Activated T-helper 1 cell treated with anti-CD3 and anti-CD28 coated beads, Interleukin-12 subunit alpha, Interleukin-12 subunit beta, Interleukin-2, Interleukin-4 antibody, amounts not matched to agents 30 ng/mL and 10 ng/mL and 1 ng/mL, durations not matched to agents 14 hours and 24 hours and 36 hours (primary cell): ENCODE measurements at regions of chr21 and their contacts with region 1.

Region 1: DNA sequence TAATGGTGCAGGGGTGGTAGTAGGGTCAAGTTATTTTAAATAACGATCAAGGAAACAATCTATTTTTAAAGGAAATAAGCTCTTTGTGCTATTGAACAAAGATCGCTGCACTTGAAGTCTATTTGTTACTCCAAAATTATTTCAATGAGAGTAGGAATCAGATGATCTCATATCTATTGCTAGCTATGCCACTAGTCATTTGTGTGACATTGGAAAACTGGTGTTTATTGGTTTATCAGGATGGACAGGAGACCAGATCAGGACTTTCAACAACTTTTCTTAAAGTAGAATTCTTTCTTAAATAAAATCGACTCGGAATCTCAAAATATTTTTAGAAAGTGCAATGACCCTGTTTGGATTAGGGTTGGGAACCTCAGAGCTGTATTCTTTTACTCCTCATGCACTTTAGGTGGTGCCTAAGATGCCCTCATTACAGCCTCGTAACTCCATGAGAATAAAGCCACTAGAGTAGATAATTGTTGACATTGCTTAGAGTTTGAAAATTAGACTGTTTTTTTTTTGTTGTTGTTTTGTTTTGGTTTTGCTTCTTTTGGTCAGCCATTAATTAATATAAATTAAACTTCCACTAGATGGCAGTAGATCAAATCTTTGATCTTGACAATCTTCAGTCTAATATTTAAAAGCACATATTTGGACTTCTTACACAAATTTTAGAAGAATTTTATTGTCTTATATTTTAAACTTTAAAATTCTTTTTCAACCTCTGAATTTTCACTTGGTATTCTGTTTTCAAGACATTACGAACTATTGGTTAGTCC is 352.4 kb downstream of the USP25 start:
- DNase-seq: no peak
- H3K4me3 Mint-ChIP-seq: no peak overlapping the region
- H3K27ac Mint-ChIP-seq: no peak overlapping the region
- H3K4me1 Mint-ChIP-seq: no peaks in the 10 kb centered on the region
- H3K27me3 Mint-ChIP-seq: no peaks in the 10 kb centered on the region

Region 2: GRCh38 chr21:15592271-15592860 is 489.9 kb before region 1 on chr21:
- intact Hi-C with region 1: no loop called
- DNase-seq: no peak
- H3K4me3 Mint-ChIP-seq: no peak overlapping the region
- H3K27ac Mint-ChIP-seq: no peak overlapping the region
- H3K4me1 Mint-ChIP-seq: no peaks in the 10 kb centered on the region
- H3K27me3 Mint-ChIP-seq: peaks cover 13% of the 10 kb centered on the region

Region 3: DNA sequence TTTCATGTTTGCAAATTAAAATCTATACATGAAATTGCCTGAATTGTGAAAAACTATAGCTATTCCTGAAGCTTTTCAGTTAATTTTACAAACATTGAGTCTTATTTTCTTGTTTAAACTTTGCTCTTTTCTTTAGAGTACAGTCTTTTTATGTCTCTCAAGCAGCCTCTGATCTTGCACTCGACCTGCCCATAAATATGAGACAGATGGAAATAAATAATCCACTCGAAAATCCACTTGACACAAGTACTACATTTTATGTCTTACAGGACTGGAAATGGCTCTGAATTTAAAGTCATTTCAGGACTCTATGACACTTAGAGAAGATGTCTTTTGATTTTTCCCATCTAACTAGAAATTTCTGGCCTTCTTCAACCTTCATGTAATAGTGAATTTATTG is 68.7 kb before region 1 on chr21:
- intact Hi-C with region 1: no loop called
- DNase-seq: no peak
- H3K4me3 Mint-ChIP-seq: no peak overlapping the region
- H3K27ac Mint-ChIP-seq: no peak overlapping the region
- H3K4me1 Mint-ChIP-seq: no peaks in the 10 kb centered on the region
- H3K27me3 Mint-ChIP-seq: no peaks in the 10 kb centered on the region

Region 4: GRCh38 chr21:16040601-16041000 is 41.6 kb before region 1 on chr21:
- intact Hi-C with region 1: no loop called
- DNase-seq: no peak
- H3K4me3 Mint-ChIP-seq: no peak overlapping the region
- H3K27ac Mint-ChIP-seq: no peak overlapping the region
- H3K4me1 Mint-ChIP-seq: no peaks in the 10 kb centered on the region
- H3K27me3 Mint-ChIP-seq: peaks cover 4% of the 10 kb centered on the region

Region 5: DNA sequence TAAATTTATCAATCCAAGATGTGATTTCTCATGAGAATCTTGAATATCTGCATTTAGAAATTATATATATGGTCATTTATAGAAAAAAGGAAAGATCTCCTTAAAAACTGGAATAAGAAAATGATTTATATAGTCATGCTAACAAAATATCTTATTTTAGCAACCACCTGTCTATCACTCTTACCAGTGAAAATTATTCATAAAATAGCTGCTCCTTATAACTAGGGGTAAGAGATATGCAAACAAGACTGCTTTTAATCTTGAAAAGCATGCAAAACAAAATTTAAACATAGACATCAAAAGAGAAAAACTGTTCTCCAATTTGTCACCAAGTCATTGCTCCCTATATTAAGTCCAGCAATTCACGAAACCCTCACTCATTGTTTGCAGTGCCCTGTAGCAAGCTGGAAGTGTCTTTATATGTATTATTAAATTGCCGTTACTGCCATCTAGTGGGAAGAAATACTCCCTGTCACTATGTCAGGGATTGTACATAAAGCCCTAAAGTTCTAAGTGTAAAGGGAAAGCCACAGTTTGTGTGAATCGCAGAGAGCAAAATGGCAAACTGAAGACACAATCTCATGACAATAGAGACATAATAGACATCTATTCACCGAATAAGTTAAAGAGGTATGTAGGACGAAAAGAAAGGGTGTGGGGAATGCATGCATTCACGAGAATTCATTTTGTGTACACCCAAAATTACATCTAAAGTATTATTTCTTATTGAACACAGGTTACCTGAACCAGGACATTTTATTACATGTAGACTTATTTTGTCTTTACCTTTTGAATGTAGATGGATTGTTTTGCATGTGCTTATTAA is 248.1 kb after region 1 on chr21:
- intact Hi-C with region 1: loop called (anchors 2 kb)
- DNase-seq: no peak
- H3K4me3 Mint-ChIP-seq: no peak overlapping the region
- H3K27ac Mint-ChIP-seq: no peak overlapping the region
- H3K4me1 Mint-ChIP-seq: no peaks in the 10 kb centered on the region
- H3K27me3 Mint-ChIP-seq: no peaks in the 10 kb centered on the region